Caco-2 (cell line): ENCODE measurements at regions of chr12 and their contacts with region 1.

Region 1: DNA sequence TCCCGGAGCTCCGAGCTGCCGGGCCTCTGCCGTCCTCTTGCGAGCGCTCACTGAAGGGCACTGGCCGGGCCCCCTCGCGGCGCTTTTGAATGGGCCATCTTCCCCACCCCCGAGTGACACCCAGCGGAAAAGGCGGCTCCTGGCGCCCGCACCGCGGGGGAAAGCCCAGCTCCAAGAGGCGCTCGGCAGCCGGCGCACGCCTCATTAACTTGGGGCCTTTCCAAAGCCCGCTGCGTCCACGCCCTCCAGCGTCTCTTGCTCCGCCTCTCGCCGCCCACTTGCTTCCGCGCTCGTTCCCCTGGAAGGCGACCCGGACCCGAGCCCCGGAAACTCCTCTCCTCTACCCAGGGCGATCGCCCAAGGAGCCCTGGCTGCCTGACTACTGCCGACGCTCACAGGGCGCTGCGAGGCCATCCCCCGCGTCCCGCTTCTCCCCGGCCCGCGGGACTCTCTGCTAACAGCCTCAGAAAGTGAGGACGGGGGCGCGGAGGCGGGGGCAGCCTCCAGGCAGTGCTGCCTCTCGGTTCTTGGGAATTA is at the start of gene PHLDA1:
- DNase-seq: peak; percentile 97 to 98
- H3K4me3 ChIP-seq: peak within 1 kb of the TSS; percentile 97
- H3K4me3 Mint-ChIP-seq: peak within 1 kb of the TSS; percentile 86
- H3K27ac Mint-ChIP-seq: peak within 1 kb of the TSS; percentile 90
- H3K4me1 ChIP-seq: peaks cover 19% of the 10 kb centered on the region
- H3K4me1 Mint-ChIP-seq: peaks cover 25% of the 10 kb centered on the region
- H3K27me3 ChIP-seq: no peaks in the 10 kb centered on the region
- H3K27me3 Mint-ChIP-seq: no peaks in the 10 kb centered on the region
- CTCF ChIP-seq: peak; percentile 63 to 85
- total RNA-seq, gene PHLDA1: 46.2 and 47.2 TPM in 2 replicates

Region 2: DNA sequence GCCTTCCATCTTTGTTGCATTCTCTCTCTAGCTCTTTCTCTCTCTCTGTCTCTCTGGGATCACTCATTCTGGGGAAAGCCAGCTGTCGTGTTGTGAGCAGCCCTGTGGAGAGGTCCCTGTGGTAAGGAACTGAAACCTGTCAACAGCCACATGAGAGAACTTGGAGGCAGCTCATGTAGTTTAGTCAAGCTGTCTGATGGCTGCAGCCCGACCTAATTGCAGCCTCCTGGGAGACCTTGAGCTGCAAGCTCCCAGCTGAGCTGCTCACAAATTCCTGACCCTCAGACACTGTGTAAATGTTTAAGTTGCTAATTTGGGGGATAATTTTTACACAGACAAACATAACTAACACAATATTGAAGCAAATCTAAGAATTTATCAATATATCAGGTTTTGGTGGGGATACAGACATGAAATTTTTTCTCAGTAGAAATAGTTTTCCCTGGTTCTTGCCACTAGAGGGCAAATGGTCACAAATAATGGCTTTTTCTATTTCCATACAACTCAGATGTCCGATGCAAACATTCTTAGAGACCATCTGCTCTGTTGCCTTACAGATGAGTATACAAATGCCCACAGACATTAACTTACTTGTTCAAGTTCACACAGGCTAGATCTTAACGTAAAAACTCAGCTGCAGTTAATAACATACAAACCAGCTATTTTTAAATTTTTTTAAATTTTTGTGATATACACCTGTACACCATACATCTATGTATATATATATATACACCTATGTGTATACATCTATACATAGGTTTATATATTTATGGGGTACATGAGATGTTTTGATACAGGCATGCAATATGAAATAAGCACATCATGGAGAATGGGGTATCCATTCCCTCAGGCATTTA is 504.7 kb before region 1 on chr12:
- CTCF ChIA-PET with region 1: interaction called, 18 read pairs
- POLR2A ChIA-PET with region 1: interaction called, 4 read pairs
- intact Hi-C with region 1: no loop called
- DNase-seq: peak; percentile 28 to 37
- H3K4me3 ChIP-seq: no peak overlapping the region
- H3K4me3 Mint-ChIP-seq: no peak overlapping the region
- H3K27ac Mint-ChIP-seq: no peak overlapping the region
- H3K4me1 ChIP-seq: no peaks in the 10 kb centered on the region
- H3K4me1 Mint-ChIP-seq: peaks cover 17% of the 10 kb centered on the region
- H3K27me3 ChIP-seq: no peaks in the 10 kb centered on the region
- H3K27me3 Mint-ChIP-seq: peaks cover 2% of the 10 kb centered on the region
- CTCF ChIP-seq: peak; percentile 75 to 77

Region 3: GRCh38 chr12:75666939-75667334 is 364.7 kb before region 1 on chr12:
- CTCF ChIA-PET with region 1: interaction called, 4 read pairs
- POLR2A ChIA-PET with region 1: interaction called, 19 read pairs
- intact Hi-C with region 1: loop called (anchors 1 kb)
- DNase-seq: peak in 1 of 2 experiments; percentile 33
- H3K4me3 ChIP-seq: no peak overlapping the region
- H3K4me3 Mint-ChIP-seq: peak overlapping the region; percentile 25
- H3K27ac Mint-ChIP-seq: peak overlapping the region; percentile 31
- H3K4me1 ChIP-seq: peaks cover 37% of the 10 kb centered on the region
- H3K4me1 Mint-ChIP-seq: peaks cover 25% of the 10 kb centered on the region
- H3K27me3 ChIP-seq: no peaks in the 10 kb centered on the region
- H3K27me3 Mint-ChIP-seq: no peaks in the 10 kb centered on the region
- CTCF ChIP-seq: no peak

Region 4: GRCh38 chr12:75816897-75817296 is 214.7 kb before region 1 on chr12:
- CTCF ChIA-PET with region 1: no interaction called
- POLR2A ChIA-PET with region 1: no interaction called
- intact Hi-C with region 1: loop called (anchors 1 kb)
- DNase-seq: no peak
- H3K4me3 ChIP-seq: no peak overlapping the region
- H3K4me3 Mint-ChIP-seq: no peak overlapping the region
- H3K27ac Mint-ChIP-seq: no peak overlapping the region
- H3K4me1 ChIP-seq: peaks cover 4% of the 10 kb centered on the region; the same call in 1 of the 2 replicates
- H3K4me1 Mint-ChIP-seq: peaks cover 6% of the 10 kb centered on the region
- H3K27me3 ChIP-seq: no peaks in the 10 kb centered on the region
- H3K27me3 Mint-ChIP-seq: no peaks in the 10 kb centered on the region
- CTCF ChIP-seq: no peak

Region 5: GRCh38 chr12:75964150-75964549 is 67.5 kb before region 1 on chr12:
- CTCF ChIA-PET with region 1: interaction called, 13 read pairs
- POLR2A ChIA-PET with region 1: interaction called, 18 read pairs
- intact Hi-C with region 1: loop called (anchors 1 kb)
- DNase-seq: no peak
- H3K4me3 ChIP-seq: no peak overlapping the region
- H3K4me3 Mint-ChIP-seq: no peak overlapping the region
- H3K27ac Mint-ChIP-seq: peak overlapping the region; percentile 23
- H3K4me1 ChIP-seq: peaks cover 48% of the 10 kb centered on the region
- H3K4me1 Mint-ChIP-seq: peaks cover 52% of the 10 kb centered on the region
- H3K27me3 ChIP-seq: no peaks in the 10 kb centered on the region
- H3K27me3 Mint-ChIP-seq: no peaks in the 10 kb centered on the region
- CTCF ChIP-seq: no peak

Region 6: GRCh38 chr12:76455582-76456345 is 424.2 kb after region 1 on chr12:
- CTCF ChIA-PET with region 1: no interaction called
- POLR2A ChIA-PET with region 1: no interaction called
- intact Hi-C with region 1: loop called (anchors 2 kb)
- DNase-seq: peak in 1 of 2 experiments; percentile 67
- H3K4me3 ChIP-seq: no peak overlapping the region
- H3K4me3 Mint-ChIP-seq: no peak overlapping the region
- H3K27ac Mint-ChIP-seq: peak overlapping the region; percentile 67
- H3K4me1 ChIP-seq: peaks cover 13% of the 10 kb centered on the region
- H3K4me1 Mint-ChIP-seq: peaks cover 13% of the 10 kb centered on the region
- H3K27me3 ChIP-seq: no peaks in the 10 kb centered on the region
- H3K27me3 Mint-ChIP-seq: no peaks in the 10 kb centered on the region
- CTCF ChIP-seq: peak; percentile 48 to 72